PC-9 (cell line): ENCODE measurements at regions of chr2 and their contacts with region 1.

Region 1: GRCh38 chr2:221641181-221641871 is 69.2 kb upstream of the EPHA4 start:
- DNase-seq: peak; percentile 78 to 85
- H3K4me3 ChIP-seq: no peak overlapping the region
- H3K27ac ChIP-seq: no peak overlapping the region
- H3K4me1 ChIP-seq: no peaks in the 10 kb centered on the region
- H3K27me3 ChIP-seq: no peaks in the 10 kb centered on the region
- CTCF ChIP-seq: no peak

Region 2: GRCh38 chr2:221426929-221427328 is 214.4 kb before region 1 on chr2:
- CTCF ChIA-PET with region 1: no interaction called
- POLR2A ChIA-PET with region 1: interaction called, 17 read pairs
- intact Hi-C with region 1: no loop called
- DNase-seq: no peak
- H3K4me3 ChIP-seq: no peak overlapping the region
- H3K27ac ChIP-seq: no peak overlapping the region
- H3K4me1 ChIP-seq: peaks cover 25% of the 10 kb centered on the region
- H3K27me3 ChIP-seq: no peaks in the 10 kb centered on the region
- CTCF ChIP-seq: no peak

Region 3: GRCh38 chr2:221517696-221518151 is 123.6 kb before region 1 on chr2:
- CTCF ChIA-PET with region 1: no interaction called
- POLR2A ChIA-PET with region 1: no interaction called
- intact Hi-C with region 1: no loop called
- DNase-seq: peak; percentile 94 to 100
- H3K4me3 ChIP-seq: 0 out of 2 replicates have a peak overlapping the region, but pooled peaks have one; percentile 6
- H3K27ac ChIP-seq: peak overlapping the region; percentile 58
- H3K4me1 ChIP-seq: peaks cover 64% of the 10 kb centered on the region
- H3K27me3 ChIP-seq: no peaks in the 10 kb centered on the region
- CTCF ChIP-seq: no peak

Region 4: GRCh38 chr2:221671515-221671914 is 30.2 kb after region 1 on chr2:
- CTCF ChIA-PET with region 1: interaction called, 12 read pairs
- POLR2A ChIA-PET with region 1: no interaction called
- intact Hi-C with region 1: no loop called
- DNase-seq: no peak
- H3K4me3 ChIP-seq: no peak overlapping the region
- H3K27ac ChIP-seq: no peak overlapping the region
- H3K4me1 ChIP-seq: 0 out of 2 replicates have a peak, but pooled peaks cover 3% of the 10 kb centered on the region
- H3K27me3 ChIP-seq: no peaks in the 10 kb centered on the region
- CTCF ChIP-seq: no peak

Region 5: DNA sequence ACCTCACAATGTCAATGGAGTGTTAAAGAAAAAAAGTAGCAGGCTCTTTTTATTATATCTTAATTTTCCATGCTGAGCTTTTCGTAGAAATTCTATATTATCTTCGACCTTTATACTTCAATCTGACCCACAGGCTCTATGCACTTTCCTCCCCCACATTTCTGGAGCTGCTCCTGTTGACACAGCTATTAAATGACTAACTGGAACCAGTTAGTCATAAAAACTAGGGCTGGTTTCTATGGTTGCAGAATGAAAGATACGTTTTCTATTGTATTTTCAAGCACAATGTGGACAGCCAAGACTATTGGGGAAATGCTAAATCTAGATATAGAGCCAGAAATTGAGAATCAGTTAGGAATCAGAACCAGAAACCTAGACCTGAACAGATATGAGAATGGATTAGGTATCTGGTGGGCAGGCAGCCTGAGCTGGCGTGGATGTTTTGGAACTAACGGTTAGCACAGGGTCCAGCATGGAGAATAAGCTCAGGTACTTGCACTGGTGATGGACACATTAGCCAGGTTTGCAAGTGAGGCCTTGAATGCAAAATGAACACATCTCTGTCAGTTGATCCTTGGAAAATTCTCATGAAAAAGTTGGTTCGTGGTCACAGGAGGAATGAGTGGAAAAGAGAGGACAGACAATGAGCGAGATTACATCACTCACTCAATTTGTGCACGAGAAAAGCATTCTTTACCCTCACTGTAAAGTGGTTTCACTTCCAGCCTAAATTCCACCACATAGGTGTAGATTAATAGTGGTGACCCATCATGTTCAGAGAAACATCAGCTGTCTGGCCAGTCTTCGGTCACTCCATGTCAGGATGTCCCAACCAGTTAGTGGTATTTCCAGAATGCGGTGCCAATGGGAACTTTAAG is 75.3 kb after region 1 on chr2:
- CTCF ChIA-PET with region 1: interaction called, 9 read pairs
- POLR2A ChIA-PET with region 1: no interaction called
- intact Hi-C with region 1: loop called (anchors 5 kb)
- DNase-seq: peak in 1 of 2 experiments; percentile 81
- H3K4me3 ChIP-seq: peak overlapping the region; percentile 2; the same call in 1 of the 2 replicates
- H3K27ac ChIP-seq: peak overlapping the region; percentile 9
- H3K4me1 ChIP-seq: peaks cover 21% of the 10 kb centered on the region
- H3K27me3 ChIP-seq: no peaks in the 10 kb centered on the region
- CTCF ChIP-seq: no peak

Region 6: DNA sequence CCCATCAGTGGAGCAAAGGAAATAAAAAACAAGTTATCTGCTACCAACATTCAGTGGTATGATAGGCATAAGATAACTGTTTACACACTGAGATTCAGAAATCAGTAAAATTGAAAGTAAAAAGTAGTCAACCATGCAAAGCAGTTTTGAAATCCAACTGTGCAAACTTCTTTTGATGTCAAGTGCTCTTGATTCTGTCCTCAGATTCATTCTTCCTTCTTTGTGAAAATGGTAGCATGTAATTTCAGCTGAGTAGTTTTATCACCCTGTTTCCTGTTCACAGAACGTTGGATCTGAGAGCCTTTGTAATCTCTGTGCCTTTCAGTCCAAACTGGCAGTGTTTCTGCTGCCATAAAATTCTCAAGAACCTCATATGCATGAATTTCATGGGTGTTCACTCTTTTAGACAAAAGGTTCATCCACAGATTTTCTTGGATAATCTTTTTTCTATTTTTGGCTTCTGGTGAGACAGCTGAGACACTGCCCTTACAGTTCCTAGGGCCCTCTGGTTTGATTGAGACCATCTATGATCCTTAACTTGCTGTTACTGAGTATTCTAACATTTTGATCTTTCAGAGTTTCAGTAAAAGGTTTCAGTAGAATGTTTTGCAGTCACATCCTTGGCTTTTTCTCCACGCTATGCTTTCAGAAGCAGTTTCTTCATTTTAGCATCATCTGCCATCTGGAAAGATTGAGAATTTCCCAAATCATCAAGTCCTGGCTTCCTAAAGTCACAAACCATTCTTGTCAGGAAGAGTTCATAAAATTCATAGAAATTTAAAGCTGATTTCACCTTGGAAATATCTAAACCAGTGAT is 203.1 kb after region 1 on chr2:
- CTCF ChIA-PET with region 1: no interaction called
- POLR2A ChIA-PET with region 1: no interaction called
- intact Hi-C with region 1: loop called (anchors 5 kb)
- DNase-seq: no peak
- H3K4me3 ChIP-seq: no peak overlapping the region
- H3K27ac ChIP-seq: peak overlapping the region; percentile 14; the same call in 1 of the 2 replicates
- H3K4me1 ChIP-seq: peaks cover 38% of the 10 kb centered on the region
- H3K27me3 ChIP-seq: no peaks in the 10 kb centered on the region
- CTCF ChIP-seq: no peak